Motor neuron (in vitro differentiated cells): ENCODE measurements at regions of chr5 and their contacts with region 1.

Region 1: DNA sequence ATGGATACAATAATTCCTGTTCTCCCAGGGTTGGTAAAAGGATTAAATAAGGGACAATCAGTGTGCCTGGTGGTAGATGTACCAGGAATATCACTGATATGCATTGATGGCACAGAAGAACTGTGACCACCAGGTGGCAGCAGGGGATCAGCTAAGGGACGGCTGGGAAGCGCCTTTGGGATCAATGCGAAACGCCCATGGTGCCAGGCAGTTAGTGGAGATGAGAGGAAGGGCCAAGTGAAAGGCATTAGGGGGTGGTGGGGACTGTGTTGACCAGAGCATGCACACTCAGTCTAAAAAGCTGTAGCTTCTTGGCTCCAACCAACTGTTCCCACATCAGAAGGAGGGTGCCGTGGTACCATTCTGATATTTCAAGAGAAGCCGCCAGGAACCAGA is 55.6 kb downstream of the ARHGEF37 start:
- ATAC-seq: peak; percentile 75 to 96 (median 88)
- H3K4me3 ChIP-seq: no peak overlapping the region
- H3K27ac ChIP-seq: no peak overlapping the region
- H3K4me1 ChIP-seq: peaks cover 3 to 14% of the 10 kb centered on the region in 2 donors

Region 2: DNA sequence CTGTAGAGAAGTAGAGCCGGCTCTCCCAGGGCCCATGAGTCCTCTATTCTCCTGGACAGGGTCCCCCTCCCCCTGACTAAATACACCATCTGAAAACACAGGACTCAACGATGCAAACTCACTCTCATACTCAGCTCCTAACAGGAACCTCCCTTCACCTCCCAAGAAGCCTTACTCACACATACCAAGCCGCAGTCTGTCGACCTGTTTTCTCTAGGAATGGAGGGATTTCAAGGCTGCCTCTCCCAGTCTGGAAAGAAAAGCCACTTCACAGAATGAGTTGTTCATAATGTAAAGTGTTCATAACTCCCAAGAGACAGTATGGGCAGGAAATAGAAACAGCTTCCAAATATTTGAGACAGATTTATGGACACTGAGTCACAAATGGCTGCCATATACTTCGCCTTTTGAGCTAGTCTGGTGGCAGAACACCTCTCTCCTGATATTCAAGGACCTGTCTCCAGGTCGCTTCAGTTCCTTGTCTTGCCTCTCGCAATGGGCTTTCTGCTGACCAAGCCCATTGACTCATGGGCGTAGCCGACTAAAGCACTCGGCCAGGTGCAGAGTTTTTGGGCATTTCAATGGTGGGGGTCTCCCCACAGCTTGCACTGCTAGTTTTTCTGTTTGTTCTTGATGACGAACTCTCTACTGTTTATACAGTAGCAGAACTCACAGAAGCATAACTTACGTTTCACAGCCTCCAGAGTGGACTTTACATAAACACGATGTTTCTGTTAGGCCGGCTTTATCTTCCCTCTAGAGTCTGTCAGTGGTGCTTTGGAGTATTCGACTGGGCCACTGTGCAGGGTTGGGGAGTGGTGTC is 232.7 kb before region 1 on chr5:
- in situ Hi-C with region 1: no loop called
- ATAC-seq: peak in 2 of 8 experiments; percentile 5 to 19
- H3K4me3 ChIP-seq: no peak overlapping the region
- H3K27ac ChIP-seq: no peak overlapping the region
- H3K4me1 ChIP-seq: peaks cover 24 to 32% of the 10 kb centered on the region in 2 donors

Region 3: DNA sequence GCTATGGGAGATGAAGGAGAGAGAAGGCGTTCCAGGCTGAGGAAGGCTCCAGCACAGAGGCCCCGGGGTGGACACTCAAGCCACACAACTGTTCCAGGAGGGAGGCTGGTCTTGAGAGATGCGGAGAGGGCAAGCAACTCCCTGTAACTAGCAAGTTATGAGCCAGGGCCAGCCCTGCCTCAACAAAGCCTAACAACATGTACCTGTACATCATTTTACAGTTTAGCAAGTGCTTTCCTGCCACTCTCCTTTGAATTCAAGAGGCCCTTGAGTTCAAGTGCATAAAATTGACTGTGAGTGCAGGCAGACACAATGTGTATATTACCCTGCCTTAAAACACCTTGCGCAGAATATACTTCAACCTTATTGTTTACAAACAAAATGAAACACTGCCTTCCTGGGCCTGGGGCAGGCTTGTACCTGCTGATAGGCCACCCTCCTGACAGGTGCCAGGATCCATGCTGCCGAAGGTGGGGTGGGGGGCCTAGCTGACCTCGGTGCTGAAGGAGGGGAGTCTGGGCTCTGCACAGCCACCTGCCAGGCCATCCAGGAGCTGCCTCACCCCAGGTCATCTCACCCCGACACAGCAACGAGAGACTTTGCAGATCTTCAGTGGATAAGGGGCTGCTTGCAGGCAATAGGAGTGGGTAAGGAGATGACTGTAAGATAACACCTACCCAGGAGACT is 173.2 kb after region 1 on chr5:
- in situ Hi-C with region 1: loop called in 1 of 9 experiments (anchors 10 kb)
- ATAC-seq: no peak
- H3K4me3 ChIP-seq: no peak overlapping the region
- H3K27ac ChIP-seq: no peak overlapping the region
- H3K4me1 ChIP-seq: peaks cover 2 to 19% of the 10 kb centered on the region in 2 donors

Region 4: GRCh38 chr5:149990518-149991376 is 353.9 kb after region 1 on chr5:
- in situ Hi-C with region 1: loop called in 8 of 9 experiments (anchors 10 to 25 kb)
- ATAC-seq: peak; percentile 74 to 90 (median 78)
- H3K4me3 ChIP-seq: no peak overlapping the region
- H3K27ac ChIP-seq: no peak overlapping the region
- H3K4me1 ChIP-seq: peaks cover 0 to 10% of the 10 kb centered on the region in 2 donors